ENCODE measurements at regions of chrX and their contacts with region 1.

Region 1: DNA sequence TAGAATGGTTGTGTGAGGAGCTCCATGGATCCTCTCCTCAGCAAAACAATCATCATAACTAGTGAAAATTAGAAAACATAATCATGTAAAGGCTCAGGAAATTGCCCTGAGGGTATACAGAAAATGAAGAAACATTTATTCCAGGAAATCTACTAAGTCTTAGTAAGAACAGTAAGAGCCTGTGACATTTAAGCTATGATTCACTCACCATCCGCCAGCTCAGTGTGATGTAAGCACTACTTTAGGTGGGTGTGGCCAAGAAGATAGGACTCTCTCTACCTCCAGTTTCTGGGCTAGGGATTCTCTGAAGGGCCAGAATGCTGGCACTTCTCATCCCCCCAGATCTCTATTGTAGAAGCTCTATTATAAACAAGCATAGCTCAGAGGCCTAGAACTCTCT is 147.5 kb downstream of the DLG3 start:
- DNase-seq: peak; percentile 59
- H3K4me3 Mint-ChIP-seq: no peak overlapping the region
- H3K27ac Mint-ChIP-seq: no peak overlapping the region
- H3K4me1 Mint-ChIP-seq: peaks cover 8% of the 10 kb centered on the region
- H3K27me3 Mint-ChIP-seq: no peaks in the 10 kb centered on the region

Region 2: GRCh38 chrX:70508296-70508911 is 83.7 kb before region 1 on chrX:
- CTCF ChIA-PET with region 1: interaction called, 3 read pairs
- POLR2A ChIA-PET with region 1: no interaction called
- intact Hi-C with region 1: loop called (anchors 1 kb)
- DNase-seq: peak; percentile 51
- H3K4me3 Mint-ChIP-seq: no peak overlapping the region
- H3K27ac Mint-ChIP-seq: peak overlapping the region; percentile 44
- H3K4me1 Mint-ChIP-seq: peaks cover 37% of the 10 kb centered on the region
- H3K27me3 Mint-ChIP-seq: peaks cover 3% of the 10 kb centered on the region

Region 3: GRCh38 chrX:70577442-70577841 is 14.6 kb before region 1 on chrX:
- CTCF ChIA-PET with region 1: no interaction called
- POLR2A ChIA-PET with region 1: no interaction called
- intact Hi-C with region 1: no loop called
- DNase-seq: no peak
- H3K4me3 Mint-ChIP-seq: no peak overlapping the region
- H3K27ac Mint-ChIP-seq: no peak overlapping the region
- H3K4me1 Mint-ChIP-seq: no peaks in the 10 kb centered on the region
- H3K27me3 Mint-ChIP-seq: peaks cover 5% of the 10 kb centered on the region

Region 4: GRCh38 chrX:70635227-70635626 is 43.1 kb after region 1 on chrX:
- CTCF ChIA-PET with region 1: no interaction called
- POLR2A ChIA-PET with region 1: no interaction called
- intact Hi-C with region 1: no loop called
- DNase-seq: no peak
- H3K4me3 Mint-ChIP-seq: no peak overlapping the region
- H3K27ac Mint-ChIP-seq: no peak overlapping the region
- H3K4me1 Mint-ChIP-seq: no peaks in the 10 kb centered on the region
- H3K27me3 Mint-ChIP-seq: no peaks in the 10 kb centered on the region

Region 5: GRCh38 chrX:70672326-70672725 is 80.2 kb after region 1 on chrX:
- CTCF ChIA-PET with region 1: no interaction called
- POLR2A ChIA-PET with region 1: no interaction called
- intact Hi-C with region 1: loop called (anchors 5 kb)
- DNase-seq: no peak
- H3K4me3 Mint-ChIP-seq: no peak overlapping the region
- H3K27ac Mint-ChIP-seq: peak overlapping the region; percentile 13
- H3K4me1 Mint-ChIP-seq: peaks cover 14% of the 10 kb centered on the region
- H3K27me3 Mint-ChIP-seq: no peaks in the 10 kb centered on the region